HEK293 (cell line): ENCODE measurements at regions of chr17 and their contacts with region 1.

Region 1: GRCh38 chr17:78497115-78497540 is 80.1 kb downstream of the DNAH17 start:
- H3K4me3 ChIP-seq: no peak overlapping the region
- H3K27ac ChIP-seq: no peak overlapping the region
- H3K4me1 ChIP-seq: no peaks in the 10 kb centered on the region
- CTCF ChIP-seq: peak; percentile 86

Region 2: GRCh38 chr17:78607038-78607437 is 109.9 kb after region 1 on chr17:
- CTCF ChIA-PET with region 1: interaction called, 30 read pairs
- POLR2A ChIA-PET with region 1: interaction called, 3 read pairs
- H3K4me3 ChIP-seq: no peak overlapping the region
- H3K27ac ChIP-seq: no peak overlapping the region
- H3K4me1 ChIP-seq: no peaks in the 10 kb centered on the region
- CTCF ChIP-seq: no peak

Region 3: DNA sequence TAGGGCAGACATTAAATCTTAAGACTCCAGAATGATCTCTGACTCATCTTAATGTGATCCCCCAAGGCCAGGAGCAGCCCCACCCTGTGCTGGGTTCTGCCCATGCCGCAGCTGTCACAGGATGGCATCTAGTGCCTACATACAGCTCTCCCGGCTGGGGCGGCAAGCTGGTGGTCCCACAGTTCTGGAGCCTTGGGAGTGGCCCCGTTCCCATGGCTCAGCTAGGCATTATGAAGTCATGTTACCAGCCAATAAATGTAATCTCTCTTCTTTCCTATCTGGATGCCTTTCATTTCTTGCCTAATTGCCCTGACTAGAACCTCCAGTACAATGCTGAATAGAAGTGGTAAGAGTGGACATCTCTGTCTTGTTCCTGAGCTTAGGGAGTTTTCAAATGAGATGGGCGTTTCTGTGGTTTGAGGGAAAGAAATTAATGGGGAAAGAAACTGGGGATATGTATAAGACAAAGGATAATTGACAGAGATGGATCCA is 175.8 kb after region 1 on chr17:
- CTCF ChIA-PET with region 1: no interaction called
- POLR2A ChIA-PET with region 1: no interaction called
- H3K4me3 ChIP-seq: no peak overlapping the region
- H3K27ac ChIP-seq: no peak overlapping the region
- H3K4me1 ChIP-seq: no peaks in the 10 kb centered on the region
- CTCF ChIP-seq: no peak

Region 4: GRCh38 chr17:78716814-78717393 is 219.8 kb after region 1 on chr17:
- CTCF ChIA-PET with region 1: interaction called, 157 read pairs
- POLR2A ChIA-PET with region 1: no interaction called
- H3K4me3 ChIP-seq: peak overlapping the region; percentile 13
- H3K27ac ChIP-seq: no peak overlapping the region; the same call in 1 of the 2 replicates
- H3K4me1 ChIP-seq: peaks cover 40% of the 10 kb centered on the region
- CTCF ChIP-seq: peak; percentile 70

Region 5: GRCh38 chr17:78748730-78749317 is 251.7 kb after region 1 on chr17:
- CTCF ChIA-PET with region 1: interaction called, 12 read pairs
- POLR2A ChIA-PET with region 1: no interaction called
- H3K4me3 ChIP-seq: no peak overlapping the region
- H3K27ac ChIP-seq: no peak overlapping the region
- H3K4me1 ChIP-seq: peaks cover 7% of the 10 kb centered on the region
- CTCF ChIP-seq: no peak